Ascending aorta (tissue), 2 donors: ENCODE measurements at regions of chr3 and their contacts with region 1.

Region 1: DNA sequence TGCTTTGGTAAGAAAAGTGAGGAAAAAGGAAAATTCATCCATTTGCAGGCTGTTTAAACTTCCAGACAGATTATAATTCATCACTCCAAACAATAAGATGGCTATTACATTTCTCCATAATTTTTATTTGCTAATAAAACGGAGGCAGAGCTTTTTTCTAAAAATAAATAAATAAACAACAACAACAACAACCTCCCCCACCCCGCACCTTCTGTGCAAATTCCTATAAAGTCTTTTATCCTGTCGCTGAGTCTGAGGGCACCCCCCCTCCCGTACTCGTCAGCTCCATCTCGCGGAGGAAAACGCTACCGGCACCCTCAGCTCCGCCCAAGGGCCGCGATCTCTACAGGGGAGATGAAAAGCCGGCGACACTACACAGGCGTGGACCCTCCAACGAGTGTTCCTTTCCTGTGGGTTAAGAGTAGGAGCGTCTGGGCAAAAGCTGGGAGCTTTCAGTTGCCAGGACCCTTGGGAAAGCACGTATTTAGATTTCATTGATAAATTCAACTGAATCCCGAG is 1.0 kb upstream of the ATP1B3 start:
- DNase-seq: peak; percentile 65 to 91
- H3K4me3 ChIP-seq: peak overlapping the region; percentile 97 to 98
- H3K27ac ChIP-seq: peak overlapping the region; percentile 99 to 100
- H3K4me1 ChIP-seq: peaks cover 0 to 11% of the 10 kb centered on the region in 2 donors
- H3K27me3 ChIP-seq: no peaks in the 10 kb centered on the region
- CTCF ChIP-seq: peak; percentile 77 to 94 (median 93)

Region 2: DNA sequence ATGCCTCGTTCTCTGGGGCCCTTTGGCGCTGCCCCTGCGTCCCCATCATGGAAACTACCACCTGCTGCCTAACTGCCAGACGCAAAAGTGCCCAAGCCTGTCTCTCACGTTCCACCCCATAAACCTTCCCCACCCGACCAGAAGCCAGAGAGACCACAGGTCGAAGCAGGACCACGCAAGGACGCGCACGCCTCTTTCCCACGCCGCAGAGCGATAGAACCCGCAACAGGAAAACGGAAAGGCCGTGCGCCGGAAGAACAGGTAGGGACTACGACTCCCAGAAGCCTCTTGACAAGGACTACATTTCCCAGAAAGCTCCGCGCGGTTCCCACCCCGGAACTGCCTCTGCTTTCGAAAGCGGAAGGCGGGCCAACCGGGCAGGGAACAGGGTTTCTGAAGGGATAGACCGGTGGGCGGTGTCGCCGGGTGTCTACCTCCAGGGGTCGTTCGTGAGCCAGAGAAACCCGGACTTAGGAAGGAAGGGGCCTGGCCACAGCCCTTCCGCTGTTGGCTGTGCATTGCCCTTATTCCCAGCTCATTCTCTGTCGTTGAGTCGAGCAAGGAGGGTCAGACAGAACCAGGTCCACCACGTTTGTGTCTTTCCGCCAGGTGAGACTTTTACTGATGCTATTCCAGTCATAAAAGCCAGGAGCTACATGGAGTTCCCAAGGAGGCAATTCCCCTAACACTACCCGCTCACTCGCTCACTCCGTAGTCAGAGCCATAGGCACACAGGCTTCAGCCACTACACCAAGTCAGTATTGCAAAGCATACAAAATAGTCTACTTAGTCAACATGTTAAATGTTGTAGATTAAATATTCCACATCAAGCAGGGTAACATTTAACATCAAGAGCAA is 563.7 kb before region 1 on chr3:
- intact Hi-C with region 1: loop called (anchors 5 kb)
- DNase-seq: peak; percentile 95 to 99
- H3K4me3 ChIP-seq: peak overlapping the region; percentile 59 to 89
- H3K27ac ChIP-seq: peak overlapping the region; percentile 63 to 82
- H3K4me1 ChIP-seq: peaks cover 0 to 8% of the 10 kb centered on the region in 2 donors
- H3K27me3 ChIP-seq: no peaks in the 10 kb centered on the region
- CTCF ChIP-seq: peak; percentile 72 to 85 (median 76)

Region 3: DNA sequence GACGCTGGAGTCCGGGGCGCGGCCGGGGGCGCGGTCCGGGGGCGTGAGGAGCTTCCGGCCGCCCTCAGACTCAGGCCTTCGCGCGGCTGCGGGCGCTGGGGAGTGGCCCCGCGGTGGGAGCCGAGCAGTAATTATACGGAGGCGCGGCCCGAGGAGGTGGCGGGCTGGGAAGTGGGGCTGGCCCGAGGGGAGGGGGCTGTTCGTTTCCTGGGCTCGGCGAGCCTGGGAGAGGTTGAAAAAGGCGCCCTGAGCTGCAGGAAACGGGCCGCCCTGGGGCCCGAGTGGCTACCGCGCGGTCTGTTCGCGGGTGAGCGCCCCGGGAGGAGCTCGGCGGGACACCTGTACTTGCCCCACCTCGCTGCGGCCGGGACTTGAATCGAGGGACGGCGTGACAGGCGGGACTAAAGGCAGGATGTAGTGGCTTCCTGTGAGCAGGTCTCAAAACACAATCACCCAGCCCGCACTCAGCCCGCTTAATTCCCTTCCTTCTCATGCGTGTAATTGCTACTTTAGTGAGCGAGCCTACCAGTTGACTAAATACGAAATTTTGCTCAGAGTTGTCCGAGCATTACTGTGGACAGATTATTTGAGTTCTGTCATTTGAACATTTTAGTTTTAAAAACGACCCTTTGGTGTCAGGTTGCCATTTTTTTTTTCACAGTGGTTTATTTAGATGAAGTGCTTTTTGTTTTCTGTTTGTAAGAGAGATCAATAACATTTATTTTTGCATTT is 387.7 kb before region 1 on chr3:
- intact Hi-C with region 1: loop called (anchors 10 kb)
- DNase-seq: peak; percentile 45 to 84
- H3K4me3 ChIP-seq: peak overlapping the region; percentile 87 to 88
- H3K27ac ChIP-seq: peak overlapping the region; percentile 88 to 95
- H3K4me1 ChIP-seq: peaks cover 3 to 8% of the 10 kb centered on the region in 2 donors
- H3K27me3 ChIP-seq: no peaks in the 10 kb centered on the region
- CTCF ChIP-seq: no peak

Region 4: DNA sequence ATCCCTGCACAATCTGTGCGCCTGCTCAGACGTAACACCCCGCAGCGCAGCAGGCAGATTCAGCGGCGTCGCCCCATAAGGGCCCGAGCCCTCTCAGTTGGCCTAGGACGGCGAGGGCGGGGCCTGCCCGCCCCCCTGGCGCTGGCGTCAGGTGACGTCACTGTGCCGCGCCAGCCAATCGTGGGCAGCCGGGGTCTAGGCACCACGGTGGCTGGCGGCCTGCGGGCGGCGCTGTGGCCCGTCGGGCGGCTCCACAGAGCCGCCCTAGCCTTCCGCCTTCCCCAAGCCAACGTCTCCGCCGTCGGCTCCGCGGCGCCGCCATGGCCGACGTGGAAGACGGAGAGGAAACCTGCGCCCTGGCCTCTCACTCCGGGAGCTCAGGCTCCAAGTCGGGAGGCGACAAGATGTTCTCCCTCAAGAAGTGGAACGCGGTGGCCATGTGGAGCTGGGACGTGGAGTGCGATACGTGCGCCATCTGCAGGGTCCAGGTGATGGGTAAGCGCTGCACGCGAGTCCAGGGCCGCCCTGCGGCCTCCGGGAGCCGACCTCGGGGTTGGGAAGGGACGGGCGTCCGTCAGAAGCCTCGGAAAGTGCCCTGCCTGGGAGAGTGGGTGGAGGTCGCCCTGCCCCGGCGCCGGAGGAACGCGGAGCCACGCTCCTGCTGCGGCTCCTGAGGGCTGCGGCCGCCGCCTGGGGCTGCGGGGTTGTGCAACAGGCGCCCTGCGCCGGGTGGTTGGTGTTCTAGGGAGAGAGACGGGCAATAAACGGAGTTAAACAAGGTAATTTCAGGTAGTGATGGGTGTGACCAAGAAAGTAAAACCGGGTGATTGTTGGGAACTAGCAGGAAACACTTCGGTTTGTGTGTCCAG is 137.2 kb before region 1 on chr3 and contains the start of gene RNF7:
- intact Hi-C with region 1: loop called (anchors 1 kb)
- DNase-seq: peak; percentile 85 to 98
- H3K4me3 ChIP-seq: peak within 1 kb of the TSS; percentile 91 to 97
- H3K27ac ChIP-seq: peak within 1 kb of the TSS; percentile 93 to 99
- H3K4me1 ChIP-seq: peaks cover 0 to 24% of the 10 kb centered on the region in 2 donors
- H3K27me3 ChIP-seq: no peaks in the 10 kb centered on the region
- CTCF ChIP-seq: peak; percentile 87 to 97 (median 89)
- total RNA-seq, gene RNF7: 32.1 TPM

Region 5: GRCh38 chr3:141769221-141769894 is 106.1 kb before region 1 on chr3:
- intact Hi-C with region 1: no loop called
- DNase-seq: no peak
- H3K4me3 ChIP-seq: no peak overlapping the region
- H3K27ac ChIP-seq: no peak overlapping the region
- H3K4me1 ChIP-seq: no peaks in the 10 kb centered on the region
- H3K27me3 ChIP-seq: no peaks in the 10 kb centered on the region
- CTCF ChIP-seq: no peak

Region 6: DNA sequence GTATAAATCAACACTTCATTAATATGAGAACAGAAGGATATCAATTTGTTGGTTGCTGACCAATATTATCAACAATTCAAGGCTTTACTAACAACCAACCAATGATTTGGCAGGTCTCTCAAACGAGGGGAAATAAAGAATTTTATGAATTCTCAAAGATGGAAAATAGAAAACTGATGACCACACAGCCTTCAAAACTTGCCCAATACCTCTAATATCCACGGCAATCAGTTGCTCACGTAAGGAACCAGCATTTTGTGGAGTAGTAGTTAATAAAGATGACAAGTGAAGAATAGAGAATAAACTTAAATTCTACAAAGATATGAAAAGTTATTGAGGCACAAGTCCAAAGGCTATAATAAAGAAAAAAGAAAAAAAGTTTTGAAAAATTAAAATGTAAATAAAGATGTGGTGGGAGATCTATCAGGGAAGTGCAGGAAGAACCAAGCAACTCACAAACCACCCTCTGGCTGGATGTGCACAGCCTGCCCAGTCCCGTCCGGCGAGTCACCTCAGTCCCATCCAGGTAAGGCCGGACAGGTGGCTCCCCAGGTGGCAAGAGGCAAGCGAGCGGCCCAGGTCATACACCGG is 349.1 kb after region 1 on chr3:
- intact Hi-C with region 1: loop called (anchors 5 kb)
- DNase-seq: no peak
- H3K4me3 ChIP-seq: peak overlapping the region; percentile 83 to 97
- H3K27ac ChIP-seq: peak overlapping the region; percentile 90 to 96
- H3K4me1 ChIP-seq: peaks cover 3 to 18% of the 10 kb centered on the region in 2 donors
- H3K27me3 ChIP-seq: no peaks in the 10 kb centered on the region
- CTCF ChIP-seq: no peak

Region 7: GRCh38 chr3:143001369-143002082 is 1126.1 kb after region 1 on chr3 and contains the start of gene U2SURP:
- intact Hi-C with region 1: loop called (anchors 5 kb)
- DNase-seq: peak; percentile 85 to 98
- H3K4me3 ChIP-seq: peak within 1 kb of the TSS; percentile 93 to 94
- H3K27ac ChIP-seq: peak within 1 kb of the TSS; percentile 93
- H3K4me1 ChIP-seq: peaks cover 4 to 28% of the 10 kb centered on the region in 2 donors
- H3K27me3 ChIP-seq: no peaks in the 10 kb centered on the region
- CTCF ChIP-seq: peak in 1 of 3 experiments; percentile 26
- total RNA-seq, gene U2SURP: 68.6 TPM